RWPE1 (cell line): ENCODE measurements at regions of chr10 and their contacts with region 1.

Region 1: DNA sequence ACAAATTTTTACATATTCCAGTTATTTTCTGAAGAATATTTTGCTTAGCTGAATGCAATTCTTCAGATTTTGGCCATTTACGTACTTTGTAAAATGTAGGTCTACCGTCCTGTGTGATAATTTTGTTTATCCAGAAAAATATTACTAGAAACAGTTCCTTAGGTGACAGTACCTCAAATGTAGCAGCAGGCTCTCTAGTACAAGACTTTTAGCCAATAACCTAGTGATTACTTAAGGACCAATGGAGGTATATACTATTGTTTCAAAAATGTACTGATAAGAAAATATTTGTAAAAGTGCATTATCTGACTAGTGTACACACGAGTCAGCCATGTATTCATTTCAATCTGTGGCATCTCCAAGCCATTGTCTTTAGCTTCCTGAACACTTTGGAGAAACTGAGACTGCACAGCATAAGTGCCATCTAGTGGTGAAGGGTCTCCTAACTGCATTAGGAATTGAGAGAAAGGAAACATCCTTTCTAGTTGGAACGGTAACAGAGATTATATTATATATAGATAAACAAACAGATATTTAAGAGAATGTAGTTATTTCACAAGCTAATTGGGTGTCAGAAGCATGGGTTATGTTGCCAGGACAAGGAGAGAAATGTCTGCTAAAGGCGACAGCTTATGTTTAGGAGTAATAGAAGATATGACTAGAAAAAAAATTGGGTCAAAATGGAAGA is 23.7 kb downstream of the RTKN2 start:
- DNase-seq: peak; percentile 26
- H3K27ac ChIP-seq: no peak overlapping the region
- CTCF ChIP-seq: peak; percentile 82

Region 2: GRCh38 chr10:62038609-62039190 is 206.2 kb before region 1 on chr10:
- CTCF ChIA-PET with region 1: interaction called, 18 read pairs
- POLR2A ChIA-PET with region 1: no interaction called
- DNase-seq: peak; percentile 78
- H3K27ac ChIP-seq: no peak overlapping the region
- CTCF ChIP-seq: peak; percentile 82

Region 3: GRCh38 chr10:62264702-62265436 is 19.9 kb after region 1 on chr10:
- CTCF ChIA-PET with region 1: no interaction called
- POLR2A ChIA-PET with region 1: no interaction called
- DNase-seq: peak; percentile 64
- H3K27ac ChIP-seq: no peak overlapping the region
- CTCF ChIP-seq: peak; percentile 75